A673 (cell line): ENCODE measurements at regions of chr14 and their contacts with region 1.

Region 1: GRCh38 chr14:78946949-78947348 is 776.8 kb downstream of the NRXN3 start:
- DNase-seq: no peak
- H3K4me3 ChIP-seq: no peak overlapping the region
- H3K27ac ChIP-seq: no peak overlapping the region
- H3K4me1 ChIP-seq: no peaks in the 10 kb centered on the region
- H3K27me3 ChIP-seq: peaks cover 6% of the 10 kb centered on the region
- CTCF ChIP-seq: no peak

Region 2: DNA sequence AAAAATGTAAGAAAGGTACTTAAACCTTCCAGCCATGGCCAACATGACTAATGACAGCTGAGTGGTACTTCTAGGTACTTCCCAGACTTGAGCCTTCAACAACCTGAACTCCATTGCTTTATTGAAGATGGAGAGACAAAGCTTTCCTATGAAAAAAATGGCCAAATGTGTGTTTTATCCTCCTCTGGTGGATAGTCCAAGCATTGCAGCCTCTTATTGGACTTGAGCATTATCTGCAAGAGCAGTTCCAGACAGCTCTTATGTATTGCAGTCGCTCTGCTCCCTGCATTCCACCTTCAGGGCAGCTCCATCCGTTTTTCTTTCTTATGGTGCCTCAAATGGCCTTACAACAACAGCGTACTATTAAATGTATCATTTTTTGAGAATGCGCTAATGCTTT is 188.6 kb before region 1 on chr14:
- CTCF ChIA-PET with region 1: no interaction called
- POLR2A ChIA-PET with region 1: no interaction called
- intact Hi-C with region 1: no loop called
- DNase-seq: peak; percentile 56
- H3K4me3 ChIP-seq: no peak overlapping the region
- H3K27ac ChIP-seq: no peak overlapping the region
- H3K4me1 ChIP-seq: no peaks in the 10 kb centered on the region
- H3K27me3 ChIP-seq: no peaks in the 10 kb centered on the region
- CTCF ChIP-seq: peak; percentile 54

Region 3: DNA sequence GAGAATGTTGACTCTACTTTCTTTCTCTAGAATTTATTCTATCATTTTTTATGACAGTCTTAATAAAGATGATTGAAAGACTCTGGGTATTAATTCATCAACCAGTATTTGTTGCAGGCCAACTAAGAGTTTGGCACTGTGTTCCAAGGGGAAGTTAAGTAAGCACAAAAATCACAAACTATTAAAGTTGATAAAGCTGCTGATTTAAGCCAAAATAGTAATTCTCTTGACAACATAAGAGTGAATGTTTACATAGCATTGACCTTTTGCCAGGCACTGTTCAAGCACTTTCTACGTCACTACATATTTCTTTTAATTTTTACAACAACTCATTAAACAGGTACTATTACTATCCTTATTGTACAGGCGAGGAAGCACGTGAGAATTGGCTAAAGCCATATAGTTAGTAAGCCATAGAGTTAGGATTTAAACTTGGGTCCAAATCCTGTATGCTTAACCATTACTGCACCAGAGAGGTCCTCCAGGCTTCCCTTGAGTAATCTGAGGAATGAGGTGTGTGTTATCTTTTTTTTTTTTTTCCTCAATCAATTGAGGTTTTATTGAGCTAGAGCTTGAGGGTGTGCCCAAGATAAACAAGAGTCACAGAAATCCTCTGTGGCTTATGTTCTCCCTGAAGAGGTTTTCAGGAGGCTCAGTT is 254.7 kb after region 1 on chr14:
- CTCF ChIA-PET with region 1: no interaction called
- POLR2A ChIA-PET with region 1: interaction called, 14 read pairs
- intact Hi-C with region 1: no loop called
- DNase-seq: no peak
- H3K4me3 ChIP-seq: no peak overlapping the region
- H3K27ac ChIP-seq: no peak overlapping the region
- H3K4me1 ChIP-seq: no peaks in the 10 kb centered on the region
- H3K27me3 ChIP-seq: no peaks in the 10 kb centered on the region
- CTCF ChIP-seq: no peak